ENCODE measurements at regions of chr13 and their contacts with region 1.

Region 1: DNA sequence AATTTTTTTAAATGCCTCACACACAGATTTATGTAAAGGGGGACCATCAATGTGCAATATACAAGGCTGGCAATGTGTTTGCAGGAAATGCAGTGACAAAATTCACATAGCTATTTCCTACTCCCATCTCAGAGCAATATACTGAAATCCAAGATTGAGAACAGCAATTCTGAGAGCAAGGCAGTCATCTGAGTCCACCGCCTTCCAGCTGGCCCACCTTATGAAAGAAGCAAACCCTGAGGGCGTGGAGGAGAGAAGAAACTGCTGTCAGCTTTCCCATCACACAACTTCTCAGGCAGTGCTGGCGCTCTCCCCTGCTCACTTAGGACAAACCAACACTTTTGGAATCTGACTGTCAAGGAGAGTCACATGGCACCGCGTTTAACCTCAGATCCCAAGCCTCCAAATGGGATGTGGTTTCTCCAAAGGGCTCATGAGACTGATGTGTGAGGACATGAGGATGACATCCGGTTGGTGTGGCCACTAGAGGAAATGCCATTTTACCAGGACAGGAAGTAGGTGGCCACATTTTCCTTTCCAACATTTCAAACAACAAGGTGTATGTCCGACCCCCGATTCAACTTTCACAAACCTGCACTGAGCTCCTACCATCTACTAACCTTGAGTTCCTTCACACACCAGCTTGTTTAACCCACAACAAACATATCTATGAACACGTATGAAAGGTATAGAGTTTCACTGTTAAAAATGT is 3.7 kb upstream of the DOCK9 start:
- DNase-seq: peak; percentile 31
- H3K4me3 Mint-ChIP-seq: peak overlapping the region; percentile 26
- H3K27ac Mint-ChIP-seq: peak overlapping the region; percentile 20
- H3K4me1 Mint-ChIP-seq: peaks cover 80% of the 10 kb centered on the region
- H3K27me3 Mint-ChIP-seq: no peaks in the 10 kb centered on the region

Region 2: DNA sequence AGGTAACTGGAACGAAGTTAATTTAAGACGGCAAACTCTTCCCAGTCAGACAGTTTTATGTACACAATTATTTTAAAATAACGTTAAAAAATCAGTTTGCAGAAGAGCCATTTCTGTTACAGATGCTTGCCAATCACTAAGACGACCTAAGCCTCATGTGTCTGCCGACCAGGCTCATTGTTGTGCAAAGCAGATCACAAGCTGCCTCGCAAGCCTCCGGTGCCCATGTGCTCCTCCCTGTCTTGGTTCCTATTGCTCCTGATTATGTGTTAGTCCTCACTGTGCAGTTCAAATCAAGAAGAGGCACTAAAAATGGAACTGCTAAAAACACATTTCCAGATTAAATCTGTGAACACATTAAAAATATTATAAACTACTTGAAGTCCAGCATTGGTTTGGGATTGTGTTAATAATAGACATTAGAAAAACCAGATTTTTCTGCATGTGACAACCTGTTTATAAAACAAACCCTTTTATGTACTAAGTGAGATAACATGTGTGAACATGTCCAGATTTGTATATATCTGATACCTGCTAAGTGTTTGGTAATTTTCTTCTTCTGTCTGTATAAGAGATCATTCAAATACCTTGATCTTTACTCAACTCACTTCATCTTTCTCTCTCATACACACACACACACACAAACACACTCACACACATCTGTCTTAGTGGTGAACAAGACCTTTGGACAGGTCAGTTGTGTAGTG is 147.1 kb before region 1 on chr13:
- CTCF ChIA-PET with region 1: no interaction called
- intact Hi-C with region 1: no loop called
- DNase-seq: no peak
- H3K4me3 Mint-ChIP-seq: no peak overlapping the region
- H3K27ac Mint-ChIP-seq: no peak overlapping the region
- H3K4me1 Mint-ChIP-seq: no peaks in the 10 kb centered on the region
- H3K27me3 Mint-ChIP-seq: no peaks in the 10 kb centered on the region

Region 3: DNA sequence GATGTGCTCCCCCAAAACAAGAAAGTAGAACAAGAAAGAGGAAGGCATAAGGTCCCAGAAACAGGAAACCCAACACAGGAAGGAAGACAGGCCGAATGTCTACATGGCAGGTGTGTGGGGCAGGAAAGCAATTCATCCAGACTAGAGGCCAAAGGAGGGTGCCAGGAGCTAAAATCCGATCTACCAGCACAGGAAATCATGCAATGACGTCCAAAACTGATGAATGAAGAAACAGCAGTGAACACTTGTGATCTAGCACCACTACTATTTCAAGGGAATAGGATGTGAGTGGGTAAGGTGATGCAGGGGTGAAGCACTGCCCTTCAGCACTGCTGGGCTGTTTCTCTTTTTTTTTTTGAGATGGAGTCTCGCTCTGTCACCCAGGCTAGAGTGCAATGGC is 62.8 kb before region 1 on chr13:
- CTCF ChIA-PET with region 1: no interaction called
- intact Hi-C with region 1: loop called (anchors 2 kb)
- DNase-seq: peak; percentile 49
- H3K4me3 Mint-ChIP-seq: no peak overlapping the region
- H3K27ac Mint-ChIP-seq: peak overlapping the region; percentile 57
- H3K4me1 Mint-ChIP-seq: peaks cover 49% of the 10 kb centered on the region
- H3K27me3 Mint-ChIP-seq: no peaks in the 10 kb centered on the region

Region 4: GRCh38 chr13:98930151-98930591 is 51.4 kb before region 1 on chr13:
- CTCF ChIA-PET with region 1: no interaction called
- intact Hi-C with region 1: loop called (anchors 2 kb)
- DNase-seq: peak; percentile 42
- H3K4me3 Mint-ChIP-seq: peak overlapping the region; percentile 71
- H3K27ac Mint-ChIP-seq: peak overlapping the region; percentile 84
- H3K4me1 Mint-ChIP-seq: peaks cover 23% of the 10 kb centered on the region
- H3K27me3 Mint-ChIP-seq: no peaks in the 10 kb centered on the region

Region 5: DNA sequence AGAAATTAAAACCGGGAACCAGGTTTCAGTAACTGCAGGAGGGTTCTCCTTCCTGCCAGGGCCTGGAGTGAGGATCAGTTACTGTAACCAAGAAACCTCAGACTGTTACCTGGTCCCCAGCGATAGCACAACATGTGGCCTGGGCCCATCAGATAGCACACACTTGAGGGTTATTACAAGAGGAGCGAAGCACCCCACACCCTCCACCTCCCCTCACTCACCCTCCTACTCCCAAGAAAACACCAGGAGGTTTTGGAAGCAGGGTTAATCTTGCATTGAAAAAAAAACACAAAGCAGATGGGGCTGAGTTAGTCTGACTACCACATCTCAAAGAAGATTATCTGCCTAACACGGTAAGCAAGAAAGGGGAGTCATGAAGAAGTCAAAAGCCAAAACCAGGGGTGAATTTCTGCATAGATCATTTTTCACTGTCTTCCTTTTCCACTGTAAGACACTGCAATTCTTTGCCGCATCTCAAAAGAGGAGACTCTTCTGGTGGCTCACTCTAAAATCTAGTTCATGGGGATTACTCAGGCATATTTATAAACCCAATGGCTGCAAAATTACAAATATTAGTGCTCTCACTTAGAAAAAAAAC is 72.2 kb after region 1 on chr13:
- CTCF ChIA-PET with region 1: no interaction called
- intact Hi-C with region 1: no loop called
- DNase-seq: peak; percentile 38
- H3K4me3 Mint-ChIP-seq: peak overlapping the region; percentile 11
- H3K27ac Mint-ChIP-seq: peak overlapping the region; percentile 39
- H3K4me1 Mint-ChIP-seq: peaks cover 81% of the 10 kb centered on the region
- H3K27me3 Mint-ChIP-seq: no peaks in the 10 kb centered on the region

Measured in activated naive CD4-positive, alpha-beta T cell treated with anti-CD3 and anti-CD28 coated beads for 36 hours (primary cell).